Activated B cell treated with CpG ODN at 0.5 μM for 24 hours (primary cell): ENCODE measurements at regions of chr11 and their contacts with region 1.

Region 1: DNA sequence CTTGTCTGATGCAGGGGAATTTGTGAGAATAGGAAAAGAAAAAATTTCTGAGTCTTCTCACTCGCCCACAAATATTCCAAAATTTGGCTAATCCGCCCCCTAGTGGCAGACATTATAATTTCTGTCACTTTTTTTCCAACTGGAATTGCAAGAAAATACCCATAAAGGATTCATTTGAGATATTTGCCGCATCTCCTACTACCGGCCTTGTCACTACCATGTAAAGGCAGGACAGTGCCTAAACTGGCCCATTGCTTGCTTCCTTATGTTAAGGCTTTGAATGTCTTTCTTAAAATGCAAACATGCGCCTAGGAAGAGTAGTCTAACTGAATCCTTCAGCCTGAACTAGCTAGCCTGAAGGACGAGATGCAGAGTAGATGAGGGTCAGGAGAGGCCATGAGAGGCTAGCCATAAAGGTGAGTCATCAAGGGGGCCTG is 9.3 kb upstream of the CEP295 start:
- DNase-seq: no peak
- ATAC-seq: no peak
- H3K4me3 Mint-ChIP-seq: no peak overlapping the region
- H3K27ac Mint-ChIP-seq: no peak overlapping the region
- H3K4me1 Mint-ChIP-seq: no peaks in the 10 kb centered on the region
- H3K27me3 Mint-ChIP-seq: peaks cover 14% of the 10 kb centered on the region
- CTCF ChIP-seq: peak; percentile 45

Region 2: GRCh38 chr11:93234602-93235207 is 417.5 kb before region 1 on chr11:
- CTCF ChIA-PET with region 1: interaction called, 58 read pairs
- POLR2A ChIA-PET with region 1: no interaction called
- intact Hi-C with region 1: loop called (anchors 1 kb)
- DNase-seq: peak; percentile 49
- ATAC-seq: peak; percentile 97
- H3K4me3 Mint-ChIP-seq: no peak overlapping the region
- H3K27ac Mint-ChIP-seq: no peak overlapping the region
- H3K4me1 Mint-ChIP-seq: no peaks in the 10 kb centered on the region
- H3K27me3 Mint-ChIP-seq: peaks cover 20% of the 10 kb centered on the region
- CTCF ChIP-seq: peak; percentile 73

Region 3: DNA sequence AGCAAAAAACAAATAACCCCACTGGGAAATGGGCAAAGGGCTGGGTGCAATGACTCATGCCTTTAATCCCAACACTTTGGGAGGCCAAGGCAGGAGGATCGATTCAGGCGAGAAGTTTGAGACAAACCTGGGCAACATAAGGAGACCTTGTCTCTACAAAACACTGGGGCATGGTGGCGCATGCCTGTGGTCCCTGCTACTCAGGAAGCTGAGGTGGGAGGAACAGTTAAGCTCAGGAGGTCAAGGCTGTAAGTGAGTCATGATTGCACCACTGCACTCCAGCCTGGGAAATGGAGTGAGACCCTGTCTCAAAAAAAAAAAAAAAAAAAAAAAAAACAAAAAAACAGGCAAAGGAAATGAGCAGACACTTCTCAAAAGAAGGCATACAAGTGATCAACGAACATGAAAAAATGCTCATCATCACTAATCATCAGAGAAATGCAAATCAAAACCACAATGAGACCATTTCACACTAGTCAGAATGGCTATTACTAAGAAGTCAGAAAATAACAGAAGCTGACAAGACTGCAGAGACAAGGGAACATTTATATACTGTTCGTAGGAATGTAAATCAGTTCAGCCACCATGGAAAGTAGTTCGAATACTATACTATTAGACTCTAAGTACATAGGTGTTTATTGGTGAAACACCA is 60.8 kb before region 1 on chr11:
- CTCF ChIA-PET with region 1: no interaction called
- POLR2A ChIA-PET with region 1: no interaction called
- intact Hi-C with region 1: no loop called
- DNase-seq: no peak
- ATAC-seq: no peak
- H3K4me3 Mint-ChIP-seq: no peak overlapping the region
- H3K27ac Mint-ChIP-seq: no peak overlapping the region
- H3K4me1 Mint-ChIP-seq: no peaks in the 10 kb centered on the region
- H3K27me3 Mint-ChIP-seq: peaks cover 16% of the 10 kb centered on the region
- CTCF ChIP-seq: no peak